A673 (cell line): ENCODE measurements at regions of chr2 and their contacts with region 1.

Region 1: GRCh38 chr2:121810959-121811853 is 55.8 kb downstream of the TSN start:
- DNase-seq: peak; percentile 89
- H3K4me3 ChIP-seq: no peak overlapping the region
- H3K27ac ChIP-seq: no peak overlapping the region
- H3K4me1 ChIP-seq: peaks cover 10% of the 10 kb centered on the region
- H3K27me3 ChIP-seq: no peaks in the 10 kb centered on the region
- CTCF ChIP-seq: peak; percentile 80

Region 2: DNA sequence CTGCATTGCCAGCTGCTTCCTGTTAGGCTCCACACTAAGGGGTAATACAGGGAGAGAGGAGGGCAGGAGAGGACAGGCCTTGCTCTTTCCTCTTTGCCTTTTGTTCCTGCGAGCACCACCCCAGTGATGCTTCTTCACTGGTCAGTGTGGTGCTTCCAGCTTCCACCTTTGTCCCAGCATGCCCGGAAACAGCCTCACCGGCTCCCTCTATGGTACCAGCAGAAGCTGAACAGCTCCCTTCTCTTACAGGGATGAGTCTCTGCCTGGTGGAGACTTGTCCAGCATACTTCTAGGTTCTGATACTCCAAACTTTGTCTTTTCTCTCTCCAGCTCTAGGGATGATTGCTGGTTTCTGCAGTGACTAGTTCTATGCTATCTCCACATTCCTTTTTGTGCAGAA is 357.6 kb after region 1 on chr2:
- CTCF ChIA-PET with region 1: no interaction called
- POLR2A ChIA-PET with region 1: no interaction called
- intact Hi-C with region 1: loop called (anchors 10 kb)
- DNase-seq: no peak
- H3K4me3 ChIP-seq: no peak overlapping the region
- H3K27ac ChIP-seq: no peak overlapping the region
- H3K4me1 ChIP-seq: no peaks in the 10 kb centered on the region
- H3K27me3 ChIP-seq: no peaks in the 10 kb centered on the region
- CTCF ChIP-seq: peak; percentile 53

Region 3: GRCh38 chr2:122323927-122324326 is 512.7 kb after region 1 on chr2:
- CTCF ChIA-PET with region 1: no interaction called
- POLR2A ChIA-PET with region 1: no interaction called
- intact Hi-C with region 1: loop called (anchors 10 kb)
- DNase-seq: no peak
- H3K4me3 ChIP-seq: no peak overlapping the region
- H3K27ac ChIP-seq: no peak overlapping the region
- H3K4me1 ChIP-seq: peaks cover 6% of the 10 kb centered on the region
- H3K27me3 ChIP-seq: no peaks in the 10 kb centered on the region
- CTCF ChIP-seq: no peak

Region 4: GRCh38 chr2:122469147-122469546 is 657.9 kb after region 1 on chr2:
- CTCF ChIA-PET with region 1: no interaction called
- POLR2A ChIA-PET with region 1: no interaction called
- intact Hi-C with region 1: loop called (anchors 10 kb)
- DNase-seq: no peak
- H3K4me3 ChIP-seq: no peak overlapping the region
- H3K27ac ChIP-seq: no peak overlapping the region
- H3K4me1 ChIP-seq: peaks cover 7% of the 10 kb centered on the region
- H3K27me3 ChIP-seq: no peaks in the 10 kb centered on the region
- CTCF ChIP-seq: no peak